CD8-positive, alpha-beta memory T cell (primary cell): ENCODE measurements at regions of chr16 and their contacts with region 1.

Region 1: DNA sequence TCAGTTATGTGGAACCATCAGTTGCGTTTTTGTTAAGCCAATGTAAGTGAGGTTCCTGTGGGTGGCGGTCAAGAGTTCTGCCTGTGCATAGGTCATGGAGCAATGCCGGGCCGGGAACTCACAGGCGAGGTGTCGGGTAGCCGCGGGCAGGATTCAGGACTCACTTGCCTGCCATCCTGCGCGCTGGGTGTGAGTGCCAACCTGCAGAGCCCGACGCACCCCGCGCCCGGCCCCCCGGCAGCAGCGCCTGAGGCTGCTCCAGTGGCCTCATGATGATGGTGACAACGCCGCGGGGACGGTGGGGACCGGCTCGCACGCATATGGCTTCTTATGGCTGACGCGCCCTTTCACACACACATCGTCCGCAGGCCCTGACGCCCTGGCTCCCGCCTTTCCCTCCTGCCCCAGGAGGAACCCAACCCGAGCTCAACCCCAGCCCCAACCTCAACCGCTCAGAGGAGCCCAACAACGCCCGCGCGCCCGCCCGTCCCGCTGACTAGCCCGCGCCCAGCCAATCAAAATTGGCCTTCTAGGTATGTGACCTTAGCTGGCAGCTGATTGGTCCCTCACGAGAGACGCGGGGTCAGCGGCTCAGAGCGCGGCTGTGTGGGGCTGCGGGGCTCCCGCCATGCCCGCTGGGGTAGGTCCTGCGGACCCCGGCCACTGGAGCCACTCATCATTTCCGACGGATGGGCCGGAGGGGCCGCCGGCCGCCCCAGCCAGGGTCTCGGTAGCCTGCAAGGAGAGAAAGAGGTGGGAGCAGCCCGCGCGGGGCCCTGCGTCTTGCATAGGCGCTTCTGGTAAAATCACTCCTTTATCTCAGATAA is at the start of gene C16orf95:
- DNase-seq: peak; percentile 93 to 97 (median 96)
- H3K4me3 ChIP-seq: peak within 1 kb of the TSS; percentile 90
- H3K4me3 Mint-ChIP-seq: peak within 1 kb of the TSS; percentile 89 to 99 (median 94)
- H3K27ac ChIP-seq: peak within 1 kb of the TSS; percentile 91
- H3K27ac Mint-ChIP-seq: peak within 1 kb of the TSS; percentile 88 to 99 (median 95)
- H3K4me1 ChIP-seq: peaks cover 9% of the 10 kb centered on the region
- H3K4me1 Mint-ChIP-seq: peaks cover 13 to 21% (median 15%) of the 10 kb centered on the region in 3 donors
- H3K27me3 ChIP-seq: no peaks in the 10 kb centered on the region
- H3K27me3 Mint-ChIP-seq: no peaks in the 10 kb centered on the region
- total RNA-seq, gene C16orf95: 7.5 to 8.4 TPM

Region 2: GRCh38 chr16:87233926-87234325 is 83.2 kb before region 1 on chr16:
- CTCF ChIA-PET with region 1: no interaction called
- POLR2A ChIA-PET with region 1: no interaction called
- DNase-seq: no peak
- H3K4me3 ChIP-seq: no peak overlapping the region
- H3K4me3 Mint-ChIP-seq: no peak overlapping the region
- H3K27ac ChIP-seq: no peak overlapping the region
- H3K27ac Mint-ChIP-seq: no peak overlapping the region
- H3K4me1 ChIP-seq: no peaks in the 10 kb centered on the region
- H3K4me1 Mint-ChIP-seq: peaks cover 15 to 17% (median 15%) of the 10 kb centered on the region in 3 donors
- H3K27me3 ChIP-seq: no peaks in the 10 kb centered on the region
- H3K27me3 Mint-ChIP-seq: peaks cover 5 to 28% of the 10 kb centered on the region in 2 donors

Region 3: GRCh38 chr16:87383629-87384161 is 66.6 kb after region 1 on chr16 and contains the start of gene FBXO31:
- CTCF ChIA-PET with region 1: interaction called, 6 read pairs
- POLR2A ChIA-PET with region 1: interaction called, 22 read pairs
- DNase-seq: peak; percentile 83 to 92 (median 90)
- H3K4me3 ChIP-seq: peak within 1 kb of the TSS; percentile 87
- H3K4me3 Mint-ChIP-seq: peak within 1 kb of the TSS; percentile 90 to 96 (median 94)
- H3K27ac ChIP-seq: peak within 1 kb of the TSS; percentile 78
- H3K27ac Mint-ChIP-seq: peak within 1 kb of the TSS; percentile 90 to 99 (median 96)
- H3K4me1 ChIP-seq: peaks cover 50% of the 10 kb centered on the region
- H3K4me1 Mint-ChIP-seq: peaks cover 55 to 75% (median 57%) of the 10 kb centered on the region in 3 donors
- H3K27me3 ChIP-seq: no peaks in the 10 kb centered on the region
- H3K27me3 Mint-ChIP-seq: peaks cover 0 to 6% of the 10 kb centered on the region in 2 donors
- total RNA-seq, gene FBXO31: 35.6 to 40.9 TPM

Region 4: GRCh38 chr16:87391950-87392822 is 75.0 kb after region 1 on chr16 and contains the start of gene MAP1LC3B:
- CTCF ChIA-PET with region 1: interaction called, 30 read pairs
- POLR2A ChIA-PET with region 1: interaction called, 11 read pairs
- DNase-seq: peak; percentile 96 to 100 (median 98)
- H3K4me3 ChIP-seq: peak within 1 kb of the TSS; percentile 53
- H3K4me3 Mint-ChIP-seq: peak within 1 kb of the TSS; percentile 91 to 95 (median 92)
- H3K27ac ChIP-seq: peak within 1 kb of the TSS; percentile 85
- H3K27ac Mint-ChIP-seq: peak within 1 kb of the TSS; percentile 89 to 98 (median 94)
- H3K4me1 ChIP-seq: peaks cover 49% of the 10 kb centered on the region
- H3K4me1 Mint-ChIP-seq: peaks cover 48 to 65% (median 60%) of the 10 kb centered on the region in 3 donors
- H3K27me3 ChIP-seq: no peaks in the 10 kb centered on the region
- H3K27me3 Mint-ChIP-seq: no peaks in the 10 kb centered on the region
- total RNA-seq, gene MAP1LC3B: 47.1 to 51.5 TPM